A549 (cell line): ENCODE measurements at regions of chr20 and their contacts with region 1.

Region 1: GRCh38 chr20:22490287-22491193 is 93.8 kb downstream of the FOXA2 start:
- DNase-seq: peak; percentile 91 to 94
- ATAC-seq: peak; percentile 92 to 94
- H3K4me3 ChIP-seq: peak overlapping the region; percentile 24
- H3K27ac ChIP-seq: peak overlapping the region; percentile 78 to 85
- H3K4me1 ChIP-seq: peaks cover 33% of the 10 kb centered on the region
- CTCF ChIP-seq: peak; percentile 51
- EP300 ChIP-seq: peak in 1 of 2 experiments; percentile 31; a peak in 1 of 5 replicates
- POLR2A ChIP-seq: 0 out of 2 replicates have a peak, but pooled peaks have one; percentile 12
- RAD21 ChIP-seq: peak; percentile 62

Region 2: DNA sequence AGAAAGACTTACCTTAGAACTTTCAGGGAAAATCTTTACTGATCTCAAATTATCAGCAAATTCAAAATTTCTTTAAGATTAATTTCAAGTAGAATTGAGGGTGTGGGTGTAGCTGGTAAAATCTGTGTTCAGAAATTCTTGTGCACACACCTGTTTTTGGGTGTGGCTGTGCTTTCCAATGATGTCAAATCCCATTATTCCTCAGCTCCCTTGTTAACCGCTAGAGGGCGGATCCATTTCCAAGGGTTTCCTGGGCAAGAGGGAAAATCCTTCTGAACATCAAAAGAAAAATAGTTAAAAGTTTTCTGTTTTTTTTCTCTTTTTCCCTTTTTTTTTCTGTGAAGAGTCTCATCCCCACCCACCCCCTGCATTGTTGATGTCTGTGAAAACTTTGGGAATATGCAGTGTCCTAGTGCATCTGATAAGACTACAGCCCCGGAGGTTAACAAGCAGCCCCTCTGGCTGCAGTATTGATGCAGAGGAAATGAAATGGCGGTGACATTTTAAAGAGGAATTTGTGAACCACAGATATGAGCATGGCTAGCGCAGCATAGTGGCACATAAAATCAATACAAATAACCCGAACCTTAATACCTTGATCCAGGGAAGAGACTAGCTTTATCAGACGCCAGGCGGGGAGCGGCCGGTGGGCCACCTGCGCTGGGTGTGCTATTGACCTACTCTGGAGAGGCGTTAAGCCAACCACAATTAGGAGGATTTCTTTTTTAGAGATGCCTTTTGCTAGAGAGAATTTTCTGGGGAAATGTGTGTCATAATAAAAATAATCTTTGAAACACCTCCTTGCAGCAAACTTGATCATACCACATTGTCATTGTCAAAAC is 37.1 kb before region 1 on chr20:
- CTCF ChIA-PET with region 1: interaction called, 20 read pairs
- POLR2A ChIA-PET with region 1: no interaction called
- DNase-seq: peak; percentile 70 to 77
- ATAC-seq: peak in 1 of 2 experiments; percentile 75; a peak in 3 of 6 replicates
- H3K4me3 ChIP-seq: no peak overlapping the region
- H3K27ac ChIP-seq: peak overlapping the region in 1 of 2 experiments; percentile 43; a peak in 3 of 6 replicates
- H3K4me1 ChIP-seq: peaks cover 8% of the 10 kb centered on the region; the same call in 2 of the 3 replicates
- CTCF ChIP-seq: peak; percentile 82
- EP300 ChIP-seq: no peak
- POLR2A ChIP-seq: no peak
- RAD21 ChIP-seq: peak; percentile 76 to 78

Region 3: DNA sequence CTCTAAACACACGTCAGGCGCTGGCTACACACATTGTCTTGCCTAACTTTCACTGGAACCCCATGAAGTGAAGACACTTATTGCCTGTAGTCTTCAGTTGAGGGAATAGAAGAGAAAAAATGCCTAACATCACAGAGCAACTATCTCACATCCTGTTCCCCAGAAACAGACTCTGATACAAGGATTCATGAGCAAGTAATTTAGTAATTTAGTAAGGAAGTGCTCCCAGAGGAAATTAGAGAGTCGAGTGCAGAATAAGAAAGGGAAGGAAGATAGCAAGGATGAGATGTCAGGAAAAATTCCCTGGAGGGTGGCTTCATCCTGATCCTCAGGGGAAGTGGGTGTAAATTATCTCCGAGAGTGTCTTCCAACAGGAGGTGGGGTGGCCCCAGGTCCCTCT is 10.2 kb before region 1 on chr20:
- CTCF ChIA-PET with region 1: interaction called, 15 read pairs
- POLR2A ChIA-PET with region 1: no interaction called
- DNase-seq: no peak
- ATAC-seq: no peak
- H3K4me3 ChIP-seq: no peak overlapping the region
- H3K27ac ChIP-seq: 0 out of 6 replicates have a peak overlapping the region, but pooled peaks of 1 of the 2 experiments have one; percentile 6
- H3K4me1 ChIP-seq: no peaks in the 10 kb centered on the region
- CTCF ChIP-seq: no peak
- EP300 ChIP-seq: no peak
- POLR2A ChIP-seq: no peak
- RAD21 ChIP-seq: no peak

Region 4: GRCh38 chr20:22575087-22575721 is 84.7 kb after region 1 on chr20:
- CTCF ChIA-PET with region 1: interaction called, 10 read pairs
- POLR2A ChIA-PET with region 1: interaction called, 5 read pairs
- DNase-seq: peak in 1 of 2 experiments; percentile 38
- ATAC-seq: peak in 1 of 2 experiments; percentile 25; a peak in 3 of 6 replicates
- H3K4me3 ChIP-seq: no peak overlapping the region
- H3K27ac ChIP-seq: peak overlapping the region; percentile 7 to 72; a peak in 4 of 6 replicates
- H3K4me1 ChIP-seq: peaks cover 39% of the 10 kb centered on the region
- CTCF ChIP-seq: no peak
- EP300 ChIP-seq: peak in 1 of 2 experiments; percentile 47; a peak in 1 of 5 replicates
- POLR2A ChIP-seq: no peak
- RAD21 ChIP-seq: no peak